OCI-LY7 (cell line): ENCODE measurements at regions of chr3 and their contacts with region 1.

Region 1: DNA sequence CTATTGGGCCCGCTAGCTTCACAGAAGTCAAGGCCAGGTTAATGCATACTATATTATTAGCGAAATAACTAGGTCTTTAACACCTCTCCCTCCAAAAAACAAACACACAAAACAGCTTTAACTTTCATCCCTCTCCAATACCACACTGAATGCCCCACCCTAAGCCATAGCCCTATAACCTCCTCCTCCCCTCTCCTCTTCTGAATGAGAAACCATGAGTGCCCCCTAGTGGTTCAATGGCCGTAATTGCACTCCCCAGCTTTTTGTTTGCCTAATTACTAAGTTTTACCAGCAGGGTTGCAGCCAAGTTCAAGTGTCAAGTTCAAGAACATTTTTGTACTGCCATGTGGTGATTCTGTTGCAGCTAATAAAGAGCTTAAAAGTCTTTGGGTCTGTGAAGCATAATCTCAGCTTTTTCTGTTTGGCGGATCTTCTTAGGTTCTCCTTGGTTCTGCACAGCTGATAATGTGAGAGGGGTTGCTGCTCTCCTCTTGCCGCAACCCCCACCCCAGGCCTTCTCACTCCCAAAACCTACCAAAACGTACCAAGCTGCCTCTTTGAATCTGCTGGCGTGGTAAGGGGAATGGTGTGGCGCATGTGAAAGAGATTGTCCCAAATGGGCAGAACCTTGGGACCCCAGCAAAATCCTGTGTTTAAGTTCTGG is 57.9 kb downstream of the RPL22L1 start:
- DNase-seq: peak; percentile 77
- H3K4me3 ChIP-seq: no peak overlapping the region
- H3K27ac ChIP-seq: no peak overlapping the region
- H3K4me1 ChIP-seq: no peaks in the 10 kb centered on the region
- CTCF ChIP-seq: peak; percentile 96

Region 2: GRCh38 chr3:169133178-169134161 is 1678.6 kb before region 1 on chr3:
- CTCF ChIA-PET with region 1: no interaction called
- POLR2A ChIA-PET with region 1: no interaction called
- intact Hi-C with region 1: no loop called
- DNase-seq: no peak
- H3K4me3 ChIP-seq: no peak overlapping the region
- H3K27ac ChIP-seq: no peak overlapping the region
- H3K4me1 ChIP-seq: no peaks in the 10 kb centered on the region
- CTCF ChIP-seq: peak; percentile 68

Region 3: DNA sequence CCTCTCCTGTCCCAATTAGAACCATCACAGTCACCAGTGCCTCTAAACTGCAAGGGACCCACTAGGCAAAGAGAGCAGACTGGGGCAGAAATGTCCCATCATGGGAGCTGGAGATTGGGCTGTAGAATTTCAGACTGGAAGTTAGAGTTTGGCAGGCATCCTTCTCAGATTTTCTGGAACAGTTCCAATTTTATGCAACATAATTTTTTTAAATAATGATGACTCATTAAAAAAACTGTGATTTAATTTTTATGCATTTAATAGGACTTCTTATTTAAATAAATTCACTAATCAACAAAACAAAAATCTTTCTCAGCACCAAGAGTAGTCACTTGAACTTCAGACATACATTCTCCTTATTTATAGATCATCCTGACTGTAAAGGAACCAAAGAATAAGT is 141.6 kb before region 1 on chr3:
- CTCF ChIA-PET with region 1: no interaction called
- POLR2A ChIA-PET with region 1: no interaction called
- intact Hi-C with region 1: no loop called
- DNase-seq: no peak
- H3K4me3 ChIP-seq: no peak overlapping the region
- H3K27ac ChIP-seq: no peak overlapping the region
- H3K4me1 ChIP-seq: no peaks in the 10 kb centered on the region
- CTCF ChIP-seq: no peak

Region 4: GRCh38 chr3:170699158-170700053 is 112.7 kb before region 1 on chr3:
- CTCF ChIA-PET with region 1: no interaction called
- POLR2A ChIA-PET with region 1: no interaction called
- intact Hi-C with region 1: loop called (anchors 5 kb)
- DNase-seq: no peak
- H3K4me3 ChIP-seq: no peak overlapping the region
- H3K27ac ChIP-seq: no peak overlapping the region
- H3K4me1 ChIP-seq: no peaks in the 10 kb centered on the region
- CTCF ChIP-seq: no peak